ENCODE measurements at regions of chr9 and their contacts with region 1.

Region 1: GRCh38 chr9:133906932-133907910 is 84.9 kb downstream of the VAV2 start:
- DNase-seq: no peak
- ATAC-seq: no peak
- H3K4me3 ChIP-seq: no peak overlapping the region
- H3K27ac ChIP-seq: no peak overlapping the region
- H3K4me1 ChIP-seq: no peaks in the 10 kb centered on the region
- H3K27me3 ChIP-seq: no peaks in the 10 kb centered on the region
- CTCF ChIP-seq: no peak

Region 2: DNA sequence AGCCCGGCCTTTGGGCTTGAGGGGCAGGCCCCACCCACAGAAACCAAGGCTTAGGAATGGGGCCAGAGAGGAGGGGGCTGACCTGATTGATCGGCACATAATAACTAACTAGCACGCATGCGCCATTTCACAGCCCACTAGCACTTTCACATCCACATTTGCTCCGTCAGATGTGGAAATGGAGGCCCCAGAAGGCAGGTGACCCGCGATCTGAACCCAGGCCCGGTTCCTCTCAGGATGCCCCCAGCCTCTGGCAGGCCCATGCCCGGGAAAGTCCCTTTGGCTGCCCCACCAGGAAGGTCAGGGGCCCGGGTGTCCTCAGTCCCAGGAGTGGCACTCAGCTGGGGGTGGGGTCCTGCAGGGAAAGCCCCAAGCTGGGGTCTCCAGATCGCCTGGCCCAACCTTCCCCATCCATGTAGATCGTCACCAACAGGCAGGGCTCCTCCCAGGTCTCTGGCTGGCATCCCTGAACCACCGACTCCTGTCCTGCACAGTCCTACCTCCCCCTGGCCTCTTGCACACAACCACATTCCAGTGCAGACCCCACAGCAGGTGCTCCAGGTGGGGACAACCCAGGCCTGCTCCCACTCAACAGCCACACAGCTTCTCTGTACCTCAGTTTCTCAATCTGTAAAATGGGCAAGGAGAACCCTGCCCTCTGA is 38.2 kb after region 1 on chr9:
- CTCF ChIA-PET with region 1: no interaction called
- POLR2A ChIA-PET with region 1: interaction called, 11 read pairs
- intact Hi-C with region 1: no loop called
- DNase-seq: no peak
- ATAC-seq: no peak
- H3K4me3 ChIP-seq: no peak overlapping the region
- H3K27ac ChIP-seq: peak overlapping the region; percentile 52
- H3K4me1 ChIP-seq: peaks cover 16% of the 10 kb centered on the region
- H3K27me3 ChIP-seq: no peaks in the 10 kb centered on the region
- CTCF ChIP-seq: no peak

Measured in PC-3 (cell line).